Activated CD8-positive, alpha-beta T cell treated with anti-CD3 and anti-CD28 coated beads for 36 hours (primary cell): ENCODE measurements at regions of chr6 and their contacts with region 1.

Region 1: DNA sequence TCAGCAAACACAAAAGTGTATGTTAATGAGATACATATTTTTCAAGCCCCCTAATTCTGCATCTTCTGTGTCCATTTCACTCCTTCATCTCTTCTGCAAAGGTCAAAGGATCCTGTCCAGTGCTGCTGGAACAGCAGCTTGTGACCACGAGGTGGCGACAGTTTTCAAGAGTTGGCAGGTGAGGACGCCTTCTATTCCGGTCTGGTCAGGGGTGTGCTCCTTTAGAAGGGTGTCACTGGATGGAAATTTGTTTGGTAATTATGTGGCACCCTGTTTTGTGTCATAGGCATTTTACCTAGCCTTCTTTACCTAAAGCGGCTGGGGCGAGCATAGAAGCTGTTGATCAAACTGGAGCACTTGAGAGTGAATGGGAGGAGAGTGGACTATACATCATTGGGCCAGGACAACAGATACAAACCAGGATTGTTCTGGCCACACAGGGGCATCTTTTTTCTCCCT is 32.9 kb upstream of the ERVFRD-1 start:
- DNase-seq: peak; percentile 87
- ATAC-seq: peak; percentile 96
- H3K4me3 Mint-ChIP-seq: no peak overlapping the region
- H3K27ac Mint-ChIP-seq: no peak overlapping the region
- H3K4me1 Mint-ChIP-seq: peaks cover 11% of the 10 kb centered on the region
- H3K27me3 Mint-ChIP-seq: no peaks in the 10 kb centered on the region
- CTCF ChIP-seq: peak; percentile 85

Region 2: GRCh38 chr6:11155589-11155988 is 11.2 kb after region 1 on chr6:
- CTCF ChIA-PET with region 1: interaction called, 19 read pairs
- POLR2A ChIA-PET with region 1: no interaction called
- intact Hi-C with region 1: no loop called
- DNase-seq: no peak
- ATAC-seq: no peak
- H3K4me3 Mint-ChIP-seq: no peak overlapping the region
- H3K27ac Mint-ChIP-seq: no peak overlapping the region
- H3K4me1 Mint-ChIP-seq: peaks cover 7% of the 10 kb centered on the region
- H3K27me3 Mint-ChIP-seq: peaks cover 6% of the 10 kb centered on the region
- CTCF ChIP-seq: no peak